ENCODE measurements at regions of chr2 and their contacts with region 1.

Region 1: GRCh38 chr2:75608684-75609333 is 37.8 kb upstream of the MRPL19 start:
- DNase-seq: peak; percentile 58
- ATAC-seq: peak; percentile 84
- H3K4me3 Mint-ChIP-seq: no peak overlapping the region
- H3K27ac Mint-ChIP-seq: no peak overlapping the region
- H3K4me1 Mint-ChIP-seq: peaks cover 4% of the 10 kb centered on the region
- H3K27me3 Mint-ChIP-seq: peaks cover 30% of the 10 kb centered on the region

Region 2: DNA sequence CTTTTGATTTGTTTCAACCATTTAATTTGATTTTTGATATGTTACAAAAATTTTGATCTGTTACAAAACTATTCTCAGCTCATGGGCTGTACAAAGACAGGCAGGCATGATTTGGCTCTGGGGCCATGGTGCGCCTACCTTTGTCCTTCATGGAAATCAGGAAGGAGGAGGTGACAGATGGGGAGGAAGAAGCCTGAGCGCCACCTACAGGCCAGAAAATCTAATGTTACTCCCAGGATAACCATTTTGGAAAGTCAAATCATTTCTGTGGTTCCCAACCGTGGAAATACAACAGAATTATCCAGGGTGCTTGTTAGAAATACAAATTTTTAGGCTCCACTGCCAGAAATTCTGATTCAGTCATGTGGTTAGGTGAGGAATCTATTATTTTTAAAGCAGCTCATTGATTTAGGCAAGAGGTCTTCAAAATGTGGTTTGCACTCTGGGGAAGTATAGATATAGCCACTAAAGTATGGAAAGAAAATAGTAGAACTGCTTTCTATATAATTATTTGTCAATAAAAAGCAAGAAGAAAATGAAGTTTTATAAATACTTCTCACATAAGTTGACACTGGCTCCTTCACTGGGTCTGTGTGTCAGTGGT is 142.0 kb before region 1 on chr2:
- CTCF ChIA-PET with region 1: interaction called, 18 read pairs
- POLR2A ChIA-PET with region 1: no interaction called
- DNase-seq: peak; percentile 23
- ATAC-seq: no peak
- H3K4me3 Mint-ChIP-seq: no peak overlapping the region
- H3K27ac Mint-ChIP-seq: no peak overlapping the region
- H3K4me1 Mint-ChIP-seq: no peaks in the 10 kb centered on the region
- H3K27me3 Mint-ChIP-seq: peaks cover 12% of the 10 kb centered on the region

Region 3: DNA sequence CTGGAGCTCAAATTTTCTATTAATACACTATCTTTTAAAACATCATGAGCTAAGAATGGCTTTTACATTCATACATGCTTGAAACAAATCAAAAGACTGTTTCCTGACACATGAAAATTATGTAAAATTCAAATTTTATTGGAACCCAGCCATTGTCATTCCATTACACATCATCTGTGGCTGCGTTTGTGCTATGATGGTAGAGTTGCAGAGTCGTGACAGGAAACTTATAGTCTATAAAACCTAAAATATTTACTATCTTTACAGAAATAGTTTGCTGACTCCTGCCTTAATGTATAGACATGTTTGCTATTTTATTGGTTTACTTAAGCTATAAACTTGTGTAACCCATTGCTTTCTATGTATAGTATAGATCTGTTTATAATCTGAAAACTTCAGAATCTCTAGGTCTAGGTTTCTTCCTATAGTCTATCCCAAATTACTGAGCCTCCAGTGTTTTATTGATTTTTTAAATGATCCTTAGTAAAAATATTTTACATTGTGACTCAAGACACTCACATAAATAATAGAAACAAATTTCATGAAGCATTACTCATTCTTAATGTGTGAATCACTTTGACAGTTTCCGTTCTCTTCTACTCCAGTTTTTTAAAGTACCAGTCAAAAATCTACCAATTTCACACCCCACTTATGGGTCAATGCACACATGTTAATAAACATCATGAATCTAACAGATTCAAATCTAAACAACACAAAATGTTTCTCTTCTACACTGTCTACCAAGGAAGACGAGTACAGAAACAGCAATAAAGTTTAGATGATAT is 11.3 kb after region 1 on chr2:
- CTCF ChIA-PET with region 1: interaction called, 17 read pairs
- POLR2A ChIA-PET with region 1: no interaction called
- DNase-seq: no peak
- ATAC-seq: no peak
- H3K4me3 Mint-ChIP-seq: no peak overlapping the region
- H3K27ac Mint-ChIP-seq: no peak overlapping the region
- H3K4me1 Mint-ChIP-seq: no peaks in the 10 kb centered on the region
- H3K27me3 Mint-ChIP-seq: peaks cover 15% of the 10 kb centered on the region

Region 4: GRCh38 chr2:75667884-75668283 is 59.1 kb after region 1 on chr2:
- CTCF ChIA-PET with region 1: no interaction called
- POLR2A ChIA-PET with region 1: no interaction called
- DNase-seq: no peak
- ATAC-seq: no peak
- H3K4me3 Mint-ChIP-seq: no peak overlapping the region
- H3K27ac Mint-ChIP-seq: no peak overlapping the region
- H3K4me1 Mint-ChIP-seq: no peaks in the 10 kb centered on the region
- H3K27me3 Mint-ChIP-seq: no peaks in the 10 kb centered on the region

Measured in activated CD8-positive, alpha-beta T cell treated with anti-CD3 and anti-CD28 coated beads, Interleukin-2, amount 10 ng/mL, durations not matched to agents 7 days and 5 days (primary cell).